ENCODE measurements at regions of chr7 and their contacts with region 1.

Region 1: GRCh38 chr7:150378853-150379440 is at the start of gene ZNF775:
- DNase-seq: peak; percentile 87 to 96 (median 90)
- ATAC-seq: peak; percentile 98
- H3K4me3 ChIP-seq: peak within 1 kb of the TSS; percentile 68
- H3K4me3 Mint-ChIP-seq: peak within 1 kb of the TSS; percentile 84 to 95 (median 90)
- H3K27ac ChIP-seq: peak within 1 kb of the TSS; percentile 91
- H3K27ac Mint-ChIP-seq: peak within 1 kb of the TSS; percentile 61 to 95 (median 86)
- H3K4me1 ChIP-seq: peaks cover 4 to 30% of the 10 kb centered on the region in 2 donors
- H3K4me1 Mint-ChIP-seq: peaks cover 32 to 57% (median 46%) of the 10 kb centered on the region in 7 donors
- H3K27me3 ChIP-seq: no peaks in the 10 kb centered on the region
- H3K27me3 Mint-ChIP-seq: no peaks in the 10 kb centered on the region
- total RNA-seq, gene ZNF775: 1.1 to 5.7 (median 4.3) TPM

Region 2: DNA sequence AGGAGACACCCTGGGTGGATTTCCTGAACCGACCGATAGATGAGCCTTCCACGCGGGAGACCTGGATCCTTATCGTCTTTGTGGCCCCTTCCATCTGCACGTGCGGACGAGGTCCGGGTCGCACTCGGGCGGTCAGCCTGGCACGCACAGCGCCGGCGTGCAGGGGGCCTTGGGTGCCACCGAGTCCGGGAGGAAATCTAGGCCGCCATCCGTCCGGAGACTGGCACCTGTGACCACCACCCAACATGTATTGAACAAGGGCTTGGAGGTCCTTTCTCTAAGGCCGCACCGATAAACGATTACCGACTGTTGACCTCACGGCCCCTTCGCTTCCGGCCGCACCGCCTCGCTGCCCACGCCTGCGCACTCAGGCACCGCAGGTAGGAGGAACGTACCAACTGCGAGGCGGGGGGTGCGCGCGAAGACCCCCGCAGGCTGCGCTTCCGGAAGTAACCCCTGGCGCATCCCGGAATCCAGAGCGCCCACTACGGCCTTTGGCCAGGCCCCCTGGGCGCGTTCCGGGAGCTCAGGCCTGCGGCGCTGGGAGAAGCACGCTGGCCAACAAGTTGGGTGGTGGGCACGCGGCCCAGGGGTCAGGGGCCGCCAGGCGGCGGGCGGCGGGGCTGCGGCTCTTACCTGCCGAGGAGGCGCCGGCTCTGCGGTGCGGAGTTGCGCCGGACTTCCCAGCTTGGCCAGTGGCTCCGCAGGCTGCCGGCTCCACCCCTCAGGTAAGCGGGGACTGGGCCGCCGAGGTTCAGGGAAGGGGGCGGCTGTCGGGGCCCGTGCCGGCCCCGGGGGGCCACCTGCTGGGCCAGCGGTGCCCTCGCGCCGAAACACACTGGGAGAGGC is 55.9 kb before region 1 on chr7 and contains the starts of genes ACTR3C and LRRC61:
- CTCF ChIA-PET with region 1: no interaction called
- POLR2A ChIA-PET with region 1: interaction called, 3 read pairs
- intact Hi-C with region 1: loop called (anchors 2 kb)
- DNase-seq: peak; percentile 23 to 75 (median 41)
- ATAC-seq: peak; percentile 67
- H3K4me3 ChIP-seq: peak within 1 kb of the TSS; percentile 95
- H3K4me3 Mint-ChIP-seq: peak within 1 kb of the TSS; percentile 88 to 100 (median 98)
- H3K27ac ChIP-seq: peak within 1 kb of the TSS; percentile 85
- H3K27ac Mint-ChIP-seq: peak within 1 kb of the TSS; percentile 94 to 99 (median 98)
- H3K4me1 ChIP-seq: peaks cover 5 to 21% of the 10 kb centered on the region in 2 donors
- H3K4me1 Mint-ChIP-seq: peaks cover 25 to 57% (median 44%) of the 10 kb centered on the region in 7 donors
- H3K27me3 ChIP-seq: no peaks in the 10 kb centered on the region
- H3K27me3 Mint-ChIP-seq: no peaks in the 10 kb centered on the region
- total RNA-seq, gene ACTR3C: 7.0 to 13.2 (median 10.6) TPM
- total RNA-seq, gene LRRC61: 8.3 to 30.0 (median 11.5) TPM

Region 3: DNA sequence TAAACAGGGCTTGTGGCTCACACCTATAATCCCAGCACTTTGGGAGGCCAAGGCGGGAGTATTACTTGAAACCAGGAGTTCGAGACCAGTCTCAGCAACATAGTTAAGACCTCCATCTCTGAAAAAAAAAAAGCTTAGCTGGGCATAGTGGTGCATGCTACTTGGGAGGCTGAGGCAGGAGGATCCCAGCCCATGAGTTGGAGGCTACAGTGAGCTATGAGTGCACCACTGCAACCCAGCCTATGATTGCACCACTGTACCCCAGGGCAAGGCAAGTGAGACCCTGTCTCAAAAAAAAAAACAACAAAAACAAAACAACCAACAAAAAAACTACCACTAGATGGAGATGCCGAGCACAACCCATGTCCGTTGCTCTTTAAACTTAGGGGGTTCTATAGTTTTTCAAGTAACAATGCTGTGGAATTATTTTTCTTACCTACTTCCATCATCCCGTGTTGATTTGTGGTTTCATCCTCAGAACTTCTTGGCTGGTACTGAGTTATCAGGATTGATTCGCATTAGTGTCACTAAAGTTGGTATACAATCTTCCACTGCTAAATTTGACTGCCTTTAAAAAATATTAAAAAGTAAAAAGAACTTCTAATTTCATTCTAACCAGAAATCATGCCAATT is 22.6 kb before region 1 on chr7:
- CTCF ChIA-PET with region 1: interaction called, 5 read pairs
- POLR2A ChIA-PET with region 1: interaction called, 14 read pairs
- intact Hi-C with region 1: loop called (anchors 1 kb)
- DNase-seq: peak in 7 of 9 donors; percentile 32 to 59 (median 53)
- ATAC-seq: peak; percentile 59
- H3K4me3 ChIP-seq: no peak overlapping the region
- H3K4me3 Mint-ChIP-seq: peak overlapping the region in 4 of 10 donors; percentile 12 to 32 (median 22)
- H3K27ac ChIP-seq: peak overlapping the region; percentile 51
- H3K27ac Mint-ChIP-seq: peak overlapping the region in 6 of 9 donors; percentile 32 to 77 (median 36)
- H3K4me1 ChIP-seq: peaks cover 6 to 28% of the 10 kb centered on the region in 2 donors
- H3K4me1 Mint-ChIP-seq: peaks cover 17 to 43% (median 41%) of the 10 kb centered on the region in 7 donors
- H3K27me3 ChIP-seq: no peaks in the 10 kb centered on the region
- H3K27me3 Mint-ChIP-seq: peaks cover 0 to 10% (median 0%) of the 10 kb centered on the region in 5 donors

Region 4: GRCh38 chr7:150368096-150368883 is 10.7 kb before region 1 on chr7 and contains the start of gene REPIN1:
- CTCF ChIA-PET with region 1: interaction called, 3 read pairs
- POLR2A ChIA-PET with region 1: interaction called, 35 read pairs
- intact Hi-C with region 1: loop called (anchors 1 kb)
- DNase-seq: peak; percentile 65 to 88 (median 80)
- ATAC-seq: peak; percentile 74
- H3K4me3 ChIP-seq: peak within 1 kb of the TSS; percentile 99
- H3K4me3 Mint-ChIP-seq: peak within 1 kb of the TSS; percentile 91 to 97 (median 95)
- H3K27ac ChIP-seq: peak within 1 kb of the TSS; percentile 83
- H3K27ac Mint-ChIP-seq: peak within 1 kb of the TSS; percentile 88 to 97 (median 95)
- H3K4me1 ChIP-seq: peaks cover 11 to 39% of the 10 kb centered on the region in 2 donors
- H3K4me1 Mint-ChIP-seq: peaks cover 24 to 67% (median 58%) of the 10 kb centered on the region in 7 donors
- H3K27me3 ChIP-seq: no peaks in the 10 kb centered on the region
- H3K27me3 Mint-ChIP-seq: no peaks in the 10 kb centered on the region
- total RNA-seq, gene REPIN1: 68.5 to 103 (median 79.7) TPM

Region 5: DNA sequence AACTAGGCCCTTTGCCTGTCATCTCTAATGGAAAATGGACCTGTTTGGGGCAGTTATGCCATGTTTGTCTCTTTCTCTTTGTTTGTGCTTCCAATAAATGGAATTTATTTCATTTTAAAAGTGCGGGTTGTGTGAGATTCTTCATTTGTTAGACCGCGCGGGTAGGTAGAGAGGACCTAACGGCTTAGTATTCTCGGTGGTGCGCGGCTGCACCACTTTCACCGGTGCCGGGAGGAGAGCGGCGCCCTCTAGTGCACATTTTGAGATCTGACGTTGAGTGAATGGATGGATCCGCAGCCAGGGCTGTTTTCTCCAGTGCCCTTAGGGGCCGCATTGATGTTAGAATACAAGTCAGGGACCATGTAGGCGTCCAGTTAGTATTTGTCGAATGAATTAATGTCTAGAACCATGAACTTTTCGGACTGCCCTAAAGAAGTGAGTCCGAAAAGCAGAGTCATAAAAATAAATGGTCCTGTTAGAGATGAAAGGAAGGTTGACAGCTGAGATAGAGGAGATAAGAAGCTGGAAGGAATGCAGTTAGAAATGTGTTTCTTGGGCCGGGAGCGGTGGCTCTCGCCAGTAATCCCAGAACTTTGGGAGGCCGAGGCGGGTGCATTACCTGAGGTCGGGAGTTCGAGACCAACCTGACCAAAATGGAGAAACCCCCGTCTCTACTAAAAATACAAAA is 42.2 kb after region 1 on chr7:
- CTCF ChIA-PET with region 1: no interaction called
- POLR2A ChIA-PET with region 1: no interaction called
- intact Hi-C with region 1: loop called in 1 of 2 experiments (anchors 1 kb)
- DNase-seq: peak; percentile 65 to 87 (median 81)
- ATAC-seq: peak; percentile 99
- H3K4me3 ChIP-seq: no peak overlapping the region
- H3K4me3 Mint-ChIP-seq: peak overlapping the region; percentile 16 to 75 (median 52)
- H3K27ac ChIP-seq: no peak overlapping the region
- H3K27ac Mint-ChIP-seq: peak overlapping the region in 7 of 9 donors; percentile 18 to 78 (median 45)
- H3K4me1 ChIP-seq: peaks cover 3 to 4% of the 10 kb centered on the region in 2 donors
- H3K4me1 Mint-ChIP-seq: peaks cover 5 to 17% (median 8%) of the 10 kb centered on the region in 7 donors
- H3K27me3 ChIP-seq: no peaks in the 10 kb centered on the region
- H3K27me3 Mint-ChIP-seq: peaks cover 0 to 6% (median 0%) of the 10 kb centered on the region in 5 donors

Region 6: DNA sequence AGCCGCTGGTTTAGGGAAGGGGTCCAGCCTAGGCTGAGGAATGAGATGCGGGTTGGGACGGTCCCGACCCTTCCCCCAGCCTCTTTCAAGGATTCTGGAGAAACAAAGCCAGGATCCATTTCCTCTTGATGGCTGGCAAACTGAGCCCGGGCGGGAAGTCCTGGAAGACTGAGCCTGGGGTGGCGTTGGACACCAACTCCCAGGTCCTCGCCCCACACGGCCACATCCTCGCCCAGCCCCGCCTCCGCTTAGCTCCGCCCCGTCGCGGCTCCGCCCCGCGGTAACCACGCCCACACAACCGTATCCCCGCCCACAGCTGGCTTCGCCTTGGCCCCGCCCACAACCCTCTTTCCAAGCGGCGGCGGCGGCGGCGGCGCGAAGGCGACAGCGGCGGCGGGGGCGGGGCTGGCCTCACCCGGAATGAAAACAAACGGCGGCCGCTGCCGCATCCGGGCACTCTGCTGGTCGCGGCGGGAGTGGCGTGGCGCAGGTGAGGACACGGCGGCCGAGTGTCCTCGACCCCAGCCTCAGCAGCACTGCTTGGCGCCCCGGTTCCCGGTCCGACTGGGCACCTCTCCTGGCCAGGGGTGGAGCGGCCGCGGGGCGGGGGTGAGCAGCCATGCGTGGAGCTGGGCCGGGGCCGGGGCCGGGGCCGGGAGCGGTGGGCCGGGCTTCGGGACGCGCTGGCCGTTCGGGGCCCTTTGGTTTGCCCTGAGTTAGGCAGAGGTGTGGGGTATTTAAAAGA is 962.6 kb after region 1 on chr7 and contains the start of gene NUB1:
- CTCF ChIA-PET with region 1: no interaction called
- POLR2A ChIA-PET with region 1: no interaction called
- intact Hi-C with region 1: loop called in 1 of 2 experiments (anchors 5 kb)
- DNase-seq: peak; percentile 79 to 99 (median 90)
- ATAC-seq: peak; percentile 98
- H3K4me3 ChIP-seq: peak within 1 kb of the TSS; percentile 84
- H3K4me3 Mint-ChIP-seq: peak within 1 kb of the TSS; percentile 84 to 91 (median 87)
- H3K27ac ChIP-seq: peak within 1 kb of the TSS; percentile 88
- H3K27ac Mint-ChIP-seq: peak within 1 kb of the TSS; percentile 83 to 96 (median 90)
- H3K4me1 ChIP-seq: peaks cover 19 to 21% of the 10 kb centered on the region in 2 donors
- H3K4me1 Mint-ChIP-seq: peaks cover 10 to 44% (median 33%) of the 10 kb centered on the region in 7 donors
- H3K27me3 ChIP-seq: no peaks in the 10 kb centered on the region
- H3K27me3 Mint-ChIP-seq: no peaks in the 10 kb centered on the region
- total RNA-seq, gene NUB1: 75.1 to 116 (median 82.0) TPM

Measured in naive thymus-derived CD4-positive, alpha-beta T cell (primary cell).